ENCODE measurements at regions of chr6 and their contacts with region 1.

Region 1: GRCh38 chr6:111938716-111939115 is 65.5 kb upstream of the FYN start:
- DNase-seq: no peak
- H3K4me3 Mint-ChIP-seq: no peak overlapping the region
- H3K27ac Mint-ChIP-seq: no peak overlapping the region
- H3K4me1 Mint-ChIP-seq: peaks cover 5% of the 10 kb centered on the region
- H3K27me3 Mint-ChIP-seq: peaks cover 3% of the 10 kb centered on the region

Region 2: GRCh38 chr6:111918825-111919224 is 19.9 kb before region 1 on chr6:
- intact Hi-C with region 1: loop called (anchors 1 kb)
- DNase-seq: no peak
- H3K4me3 Mint-ChIP-seq: no peak overlapping the region
- H3K27ac Mint-ChIP-seq: no peak overlapping the region
- H3K4me1 Mint-ChIP-seq: peaks cover 8% of the 10 kb centered on the region
- H3K27me3 Mint-ChIP-seq: peaks cover 4% of the 10 kb centered on the region

Measured in activated T-helper 1 cell treated with anti-CD3 and anti-CD28 coated beads, Interleukin-12 subunit alpha, Interleukin-12 subunit beta, Interleukin-2, Interleukin-4 antibody, amounts not matched to agents 30 ng/mL and 10 ng/mL and 1 ng/mL, durations not matched to agents 14 hours and 24 hours and 36 hours (primary cell).